PC-3 (cell line): ENCODE measurements at regions of chr10 and their contacts with region 1.

Region 1: GRCh38 chr10:97349752-97350513 is 15.4 kb upstream of the FRAT2 start:
- DNase-seq: no peak
- ATAC-seq: no peak
- H3K4me3 ChIP-seq: no peak overlapping the region
- H3K27ac ChIP-seq: no peak overlapping the region
- H3K4me1 ChIP-seq: no peaks in the 10 kb centered on the region
- H3K27me3 ChIP-seq: no peaks in the 10 kb centered on the region
- CTCF ChIP-seq: no peak

Region 2: GRCh38 chr10:97259119-97259518 is 90.8 kb before region 1 on chr10:
- CTCF ChIA-PET with region 1: no interaction called
- POLR2A ChIA-PET with region 1: no interaction called
- intact Hi-C with region 1: no loop called
- DNase-seq: no peak
- ATAC-seq: no peak
- H3K4me3 ChIP-seq: no peak overlapping the region
- H3K27ac ChIP-seq: no peak overlapping the region
- H3K4me1 ChIP-seq: no peaks in the 10 kb centered on the region
- H3K27me3 ChIP-seq: no peaks in the 10 kb centered on the region
- CTCF ChIP-seq: no peak

Region 3: GRCh38 chr10:97318772-97319651 is 30.9 kb before region 1 on chr10 and contains the start of gene FRAT1:
- CTCF ChIA-PET with region 1: no interaction called
- POLR2A ChIA-PET with region 1: interaction called, 11 read pairs
- intact Hi-C with region 1: no loop called
- DNase-seq: peak; percentile 80
- ATAC-seq: peak; percentile 75
- H3K4me3 ChIP-seq: peak within 1 kb of the TSS; percentile 80
- H3K27ac ChIP-seq: peak within 1 kb of the TSS; percentile 92
- H3K4me1 ChIP-seq: peaks cover 9% of the 10 kb centered on the region
- H3K27me3 ChIP-seq: no peaks in the 10 kb centered on the region
- CTCF ChIP-seq: no peak
- total RNA-seq, gene FRAT1: 4.1 and 4.4 TPM in 2 replicates

Region 4: DNA sequence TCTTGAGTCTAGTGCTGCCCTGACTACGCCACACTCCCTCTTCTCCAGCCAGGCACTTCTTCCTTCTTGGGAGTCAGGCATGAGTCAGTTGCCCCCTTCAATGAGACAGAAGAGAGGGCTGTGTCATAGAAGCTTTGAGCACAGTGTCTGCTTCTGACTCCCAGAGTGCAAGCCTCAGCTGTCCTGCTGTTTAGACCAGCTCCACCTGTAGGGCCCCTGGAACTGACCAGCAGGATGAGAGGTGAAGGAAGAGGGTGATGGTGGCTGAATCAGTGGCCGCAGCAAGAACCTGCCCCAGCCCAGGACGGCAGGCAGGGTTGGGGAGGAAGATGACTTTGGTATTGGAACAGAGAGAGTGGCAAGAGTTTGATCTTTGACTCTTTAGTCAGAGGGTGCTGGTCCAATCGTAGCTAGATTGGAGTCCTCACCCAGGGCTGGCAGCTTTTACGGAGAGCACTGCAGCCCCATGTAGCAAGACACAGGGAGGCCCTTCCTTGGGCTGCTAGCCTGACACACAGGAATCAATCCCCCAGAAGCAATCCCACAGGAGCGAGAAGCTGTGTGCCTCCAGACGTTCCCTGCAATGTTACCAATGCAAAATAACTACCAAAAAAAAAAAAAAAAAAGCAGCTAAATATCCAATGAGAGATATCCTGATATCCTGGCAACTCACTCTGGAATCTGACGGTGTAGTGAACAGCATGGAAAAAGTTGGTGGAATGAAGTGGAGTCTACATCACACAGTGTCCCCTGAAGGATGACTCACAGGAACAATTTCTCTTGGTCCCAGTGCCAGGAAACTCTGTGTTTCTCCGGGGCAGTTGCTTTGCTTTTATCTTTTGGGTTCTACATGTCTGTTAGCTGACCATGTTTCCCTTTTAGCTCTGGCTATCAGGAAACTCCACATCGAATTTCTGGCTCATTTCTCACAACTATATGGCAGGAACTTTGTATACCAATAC is 246.4 kb after region 1 on chr10:
- CTCF ChIA-PET with region 1: no interaction called
- POLR2A ChIA-PET with region 1: no interaction called
- intact Hi-C with region 1: no loop called
- DNase-seq: peak; percentile 69
- ATAC-seq: peak; percentile 84
- H3K4me3 ChIP-seq: no peak overlapping the region
- H3K27ac ChIP-seq: peak overlapping the region; percentile 67
- H3K4me1 ChIP-seq: peaks cover 26% of the 10 kb centered on the region
- H3K27me3 ChIP-seq: no peaks in the 10 kb centered on the region
- CTCF ChIP-seq: no peak